ENCODE measurements at regions of chr1 and their contacts with region 1.

Region 1: GRCh38 chr1:205485338-205486228 is 18.9 kb upstream of the CDK18 start:
- DNase-seq: peak; percentile 75 to 94
- ATAC-seq: peak; percentile 75 to 89
- H3K4me3 ChIP-seq: no peak overlapping the region
- H3K27ac ChIP-seq: no peak overlapping the region
- H3K4me1 ChIP-seq: no peaks in the 10 kb centered on the region
- CTCF ChIP-seq: peak; percentile 92
- EP300 ChIP-seq: no peak
- POLR2A ChIP-seq: no peak
- RAD21 ChIP-seq: peak; percentile 92 to 93

Region 2: DNA sequence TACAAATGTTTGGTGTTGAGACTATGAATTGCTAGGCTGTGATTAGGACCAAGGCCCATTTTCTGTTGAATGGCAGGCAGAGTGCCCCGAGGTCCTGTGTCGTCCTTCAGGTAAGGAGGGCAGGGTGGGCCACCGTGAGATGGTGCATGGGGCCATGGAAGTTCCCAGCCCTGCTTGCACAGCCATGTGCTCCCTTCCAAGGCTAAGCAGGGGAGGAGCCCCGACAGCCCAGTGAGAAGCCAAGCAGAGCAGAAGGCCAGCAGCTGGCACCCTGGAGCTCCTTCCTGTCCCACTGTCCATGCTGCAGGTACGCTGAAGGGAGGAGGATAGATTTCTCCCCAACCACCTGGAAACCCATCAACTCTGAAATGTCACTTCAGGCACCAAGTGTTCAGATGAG is 155.9 kb before region 1 on chr1:
- CTCF ChIA-PET with region 1: interaction called, 161 read pairs
- POLR2A ChIA-PET with region 1: no interaction called
- DNase-seq: no peak
- ATAC-seq: no peak
- H3K4me3 ChIP-seq: no peak overlapping the region
- H3K27ac ChIP-seq: peak overlapping the region in 1 of 2 experiments; percentile 55; a peak in 1 of 6 replicates
- H3K4me1 ChIP-seq: peaks cover 11% of the 10 kb centered on the region
- CTCF ChIP-seq: no peak
- EP300 ChIP-seq: no peak
- POLR2A ChIP-seq: no peak
- RAD21 ChIP-seq: no peak

Region 3: GRCh38 chr1:205359771-205360565 is 125.6 kb before region 1 on chr1:
- CTCF ChIA-PET with region 1: interaction called, 191 read pairs
- POLR2A ChIA-PET with region 1: no interaction called
- DNase-seq: no peak
- ATAC-seq: no peak
- H3K4me3 ChIP-seq: no peak overlapping the region
- H3K27ac ChIP-seq: no peak overlapping the region
- H3K4me1 ChIP-seq: 0 out of 3 replicates have a peak, but pooled peaks cover 5% of the 10 kb centered on the region
- CTCF ChIP-seq: no peak
- EP300 ChIP-seq: no peak
- POLR2A ChIP-seq: no peak
- RAD21 ChIP-seq: no peak

Region 4: DNA sequence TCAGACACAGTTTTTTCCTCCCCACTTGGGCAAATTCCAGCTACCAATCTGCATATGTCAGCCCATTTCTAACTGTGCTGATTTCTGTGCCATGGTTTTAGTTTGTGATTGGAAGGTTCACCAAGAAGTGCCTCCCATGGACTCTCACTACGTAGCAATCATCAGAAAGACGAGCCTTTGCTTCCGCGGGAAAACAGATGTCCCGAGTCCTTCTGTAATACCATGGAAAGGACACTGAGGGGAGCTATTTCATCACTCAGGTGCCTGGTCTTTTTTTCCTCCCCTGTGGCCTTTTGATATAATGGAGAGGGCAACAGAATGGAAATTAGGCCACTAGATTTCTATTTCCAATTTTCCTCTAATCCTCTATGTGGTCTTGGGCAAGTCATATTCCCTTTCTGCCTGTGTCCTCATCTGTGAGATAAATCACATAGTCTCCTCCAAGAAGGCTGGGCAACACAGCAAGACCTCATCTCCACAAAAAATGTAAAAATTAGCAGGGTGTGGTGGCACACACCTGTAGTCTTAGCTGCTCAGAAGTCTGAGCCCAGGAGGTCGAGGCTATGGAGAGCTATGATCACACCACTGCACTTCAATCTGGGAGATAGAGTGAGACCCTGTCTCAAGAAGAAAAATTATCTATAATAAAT is 88.5 kb before region 1 on chr1:
- CTCF ChIA-PET with region 1: interaction called, 94 read pairs
- POLR2A ChIA-PET with region 1: no interaction called
- DNase-seq: peak; percentile 61 to 67
- ATAC-seq: peak; percentile 68 to 85; a peak in 5 of 6 replicates
- H3K4me3 ChIP-seq: no peak overlapping the region
- H3K27ac ChIP-seq: no peak overlapping the region
- H3K4me1 ChIP-seq: no peaks in the 10 kb centered on the region
- CTCF ChIP-seq: peak; percentile 71
- EP300 ChIP-seq: no peak
- POLR2A ChIP-seq: no peak
- RAD21 ChIP-seq: peak; percentile 81 to 89

Region 5: GRCh38 chr1:205440476-205441317 is 44.9 kb before region 1 on chr1:
- CTCF ChIA-PET with region 1: interaction called, 146 read pairs
- POLR2A ChIA-PET with region 1: no interaction called
- DNase-seq: peak in 1 of 2 experiments; percentile 53
- ATAC-seq: peak; percentile 31 to 50; a peak in 5 of 6 replicates
- H3K4me3 ChIP-seq: no peak overlapping the region
- H3K27ac ChIP-seq: peak overlapping the region in 1 of 2 experiments; percentile 24; a peak in 2 of 6 replicates
- H3K4me1 ChIP-seq: peaks cover 16% of the 10 kb centered on the region
- CTCF ChIP-seq: no peak
- EP300 ChIP-seq: no peak
- POLR2A ChIP-seq: no peak
- RAD21 ChIP-seq: no peak

Region 6: DNA sequence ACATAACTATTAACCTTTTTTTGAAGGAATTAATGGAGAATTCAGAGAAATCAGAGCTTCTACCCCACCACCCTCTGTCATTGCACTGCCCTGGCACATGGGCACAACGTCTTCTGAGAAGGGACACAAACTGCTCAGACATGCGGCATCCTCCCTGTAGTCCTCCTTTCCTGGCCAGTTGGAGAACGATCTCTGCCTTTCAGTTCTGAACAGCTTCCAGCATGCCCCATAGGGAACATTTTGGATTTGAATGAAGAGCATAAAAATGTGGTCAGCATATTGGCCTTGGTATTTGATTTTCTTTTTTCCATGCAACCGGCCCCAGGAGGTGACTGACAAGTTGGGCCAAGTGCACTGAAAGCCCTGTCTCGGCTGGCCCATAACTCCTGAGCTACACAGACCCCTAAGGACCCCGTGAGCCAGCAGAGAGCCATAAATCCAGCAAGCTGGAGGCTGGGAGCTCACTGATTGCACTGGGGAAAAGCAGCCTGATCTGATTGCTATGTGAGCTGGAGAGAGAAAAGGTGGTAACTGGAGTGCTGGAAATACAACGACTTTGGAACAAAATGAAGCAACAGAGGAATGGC is 18.9 kb before region 1 on chr1:
- CTCF ChIA-PET with region 1: interaction called, 158 read pairs
- POLR2A ChIA-PET with region 1: no interaction called
- DNase-seq: no peak
- ATAC-seq: no peak
- H3K4me3 ChIP-seq: no peak overlapping the region
- H3K27ac ChIP-seq: no peak overlapping the region
- H3K4me1 ChIP-seq: no peaks in the 10 kb centered on the region
- CTCF ChIP-seq: no peak
- EP300 ChIP-seq: no peak
- POLR2A ChIP-seq: no peak
- RAD21 ChIP-seq: no peak

Region 7: DNA sequence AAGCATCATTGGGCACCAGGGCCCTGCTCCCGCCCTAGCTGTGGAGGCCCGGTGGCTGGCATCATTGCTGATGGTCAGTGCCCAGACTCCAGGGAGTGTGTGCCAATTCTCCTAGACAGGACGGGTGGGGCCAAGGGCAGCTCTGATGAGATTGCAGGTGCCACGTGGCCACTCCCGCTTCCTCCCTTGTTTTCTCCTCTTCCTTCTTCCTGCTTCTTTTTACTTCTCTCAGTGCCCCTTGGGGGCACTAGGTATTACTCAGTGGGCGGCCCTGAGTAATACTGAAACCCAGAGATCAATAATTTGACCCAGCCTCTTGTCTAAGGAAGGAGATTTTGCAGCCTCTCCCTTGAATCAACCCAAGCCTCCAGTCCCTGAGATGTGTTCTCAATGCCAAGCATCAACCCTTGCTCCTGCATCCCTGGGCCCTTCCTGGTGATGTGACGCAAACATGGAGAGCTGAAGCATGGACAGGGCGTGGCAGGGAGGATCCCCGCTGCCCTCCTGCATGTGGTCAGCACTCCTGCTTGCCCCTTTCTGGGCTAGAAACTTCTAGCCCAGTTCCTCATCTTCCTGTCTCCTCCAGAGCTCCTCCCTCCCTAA is 51.3 kb after region 1 on chr1:
- CTCF ChIA-PET with region 1: interaction called, 560 read pairs
- POLR2A ChIA-PET with region 1: no interaction called
- DNase-seq: no peak
- ATAC-seq: peak in 1 of 2 experiments; percentile 15; a peak in 2 of 6 replicates
- H3K4me3 ChIP-seq: no peak overlapping the region
- H3K27ac ChIP-seq: no peak overlapping the region
- H3K4me1 ChIP-seq: peaks cover 7% of the 10 kb centered on the region; the same call in 1 of the 3 replicates
- CTCF ChIP-seq: no peak
- EP300 ChIP-seq: no peak
- POLR2A ChIP-seq: no peak
- RAD21 ChIP-seq: no peak

Region 8: GRCh38 chr1:205565784-205566183 is 80.2 kb after region 1 on chr1:
- CTCF ChIA-PET with region 1: no interaction called
- POLR2A ChIA-PET with region 1: no interaction called
- DNase-seq: no peak
- ATAC-seq: no peak
- H3K4me3 ChIP-seq: no peak overlapping the region
- H3K27ac ChIP-seq: no peak overlapping the region
- H3K4me1 ChIP-seq: peaks cover 5% of the 10 kb centered on the region; the same call in 1 of the 3 replicates
- CTCF ChIP-seq: no peak
- EP300 ChIP-seq: no peak
- POLR2A ChIP-seq: no peak
- RAD21 ChIP-seq: no peak